PC-9 (cell line): ENCODE measurements at regions of chr7 and their contacts with region 1.

Region 1: DNA sequence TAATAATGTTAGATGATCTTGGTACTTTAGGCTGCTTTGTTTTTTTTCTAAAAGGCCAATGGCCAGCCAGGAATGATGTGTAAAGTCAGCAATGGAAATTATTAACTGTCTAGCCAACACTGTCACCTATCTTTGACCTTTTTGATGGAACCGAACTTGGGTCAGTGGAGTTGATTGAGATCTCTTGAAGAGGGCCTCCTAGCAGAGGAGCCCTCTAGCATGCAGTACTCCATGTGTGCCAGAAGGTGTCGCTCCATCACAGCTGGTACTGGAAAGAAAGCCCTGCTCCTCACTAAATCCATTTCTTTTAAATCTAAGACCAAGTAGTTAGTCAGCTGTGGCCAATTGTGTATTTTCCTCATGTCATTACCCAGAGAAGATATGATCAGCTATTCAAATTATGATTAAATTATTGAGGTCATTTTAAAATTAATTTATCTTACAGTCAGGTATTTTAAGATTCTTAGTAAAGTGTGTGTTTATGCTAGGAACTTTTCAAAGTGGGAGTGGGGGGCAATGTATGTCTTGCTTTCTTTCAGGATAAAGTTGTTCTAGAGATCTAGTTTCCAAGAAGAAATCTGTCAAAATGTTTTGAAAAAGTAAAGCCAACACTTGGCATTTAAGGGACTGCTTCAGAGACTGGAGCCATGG is 33.1 kb upstream of the CROT start:
- DNase-seq: peak; percentile 53
- H3K4me3 ChIP-seq: no peak overlapping the region
- H3K27ac ChIP-seq: no peak overlapping the region
- H3K4me1 ChIP-seq: peaks cover 16% of the 10 kb centered on the region
- H3K27me3 ChIP-seq: no peaks in the 10 kb centered on the region
- CTCF ChIP-seq: peak; percentile 98

Region 2: GRCh38 chr7:87219545-87220025 is 92.8 kb before region 1 on chr7 and contains the start of gene TMEM243:
- CTCF ChIA-PET with region 1: no interaction called
- POLR2A ChIA-PET with region 1: no interaction called
- intact Hi-C with region 1: loop called (anchors 1 kb)
- DNase-seq: peak; percentile 57 to 64
- H3K4me3 ChIP-seq: peak within 1 kb of the TSS; percentile 94
- H3K27ac ChIP-seq: peak within 1 kb of the TSS; percentile 36
- H3K4me1 ChIP-seq: peaks cover 20% of the 10 kb centered on the region
- H3K27me3 ChIP-seq: no peaks in the 10 kb centered on the region
- CTCF ChIP-seq: no peak
- total RNA-seq, gene TMEM243: 24.6 and 26.5 TPM in 2 replicates

Region 3: GRCh38 chr7:87398446-87398845 is 86.1 kb after region 1 on chr7:
- CTCF ChIA-PET with region 1: no interaction called
- POLR2A ChIA-PET with region 1: no interaction called
- intact Hi-C with region 1: loop called (anchors 5 kb)
- DNase-seq: peak; percentile 33 to 90
- H3K4me3 ChIP-seq: no peak overlapping the region
- H3K27ac ChIP-seq: peak overlapping the region; percentile 22
- H3K4me1 ChIP-seq: peaks cover 26% of the 10 kb centered on the region
- H3K27me3 ChIP-seq: no peaks in the 10 kb centered on the region
- CTCF ChIP-seq: no peak

Region 4: DNA sequence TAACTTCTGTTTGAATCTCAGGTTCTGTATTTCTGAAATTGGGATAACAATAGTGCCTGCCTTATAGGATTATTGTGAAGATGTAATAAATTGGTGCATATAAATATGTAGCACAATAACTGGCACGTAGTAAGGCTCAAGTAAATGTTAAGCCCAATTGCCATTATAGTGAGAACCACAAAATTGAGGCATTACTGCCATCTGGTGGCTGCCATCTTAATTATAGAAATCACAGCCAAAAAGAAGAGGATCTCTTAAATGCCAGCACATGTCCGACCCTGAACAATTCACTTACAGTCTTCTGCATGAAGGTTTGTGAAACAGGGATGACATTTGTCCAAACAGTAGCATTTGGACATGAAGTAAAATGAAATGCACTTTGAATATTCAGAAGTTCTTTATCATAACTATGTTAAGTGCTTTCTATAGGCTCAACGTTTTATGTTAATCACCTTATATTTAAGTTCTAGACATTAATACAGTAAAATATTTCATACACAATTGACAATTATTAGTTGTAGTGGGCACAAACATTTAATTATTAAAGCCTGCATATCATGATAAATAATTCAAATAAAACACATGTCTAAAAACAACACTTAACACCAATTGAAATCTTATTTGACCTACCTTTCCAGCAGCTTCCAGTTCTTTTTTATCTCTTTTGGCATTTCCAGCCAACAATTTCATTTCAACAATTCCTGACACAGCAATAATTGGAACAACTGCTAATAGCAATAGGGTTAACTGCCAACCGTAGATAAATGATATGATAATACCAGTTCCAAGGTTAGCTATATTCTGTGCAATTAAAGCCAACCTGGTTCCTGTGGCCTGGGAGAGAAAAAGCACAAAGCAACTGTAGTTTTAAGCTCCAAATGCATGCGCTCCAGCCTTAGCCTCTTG is 104.6 kb after region 1 on chr7:
- CTCF ChIA-PET with region 1: interaction called, 4 read pairs
- POLR2A ChIA-PET with region 1: no interaction called
- intact Hi-C with region 1: loop called (anchors 1 kb)
- DNase-seq: peak in 1 of 2 experiments; percentile 55
- H3K4me3 ChIP-seq: no peak overlapping the region
- H3K27ac ChIP-seq: no peak overlapping the region
- H3K4me1 ChIP-seq: no peaks in the 10 kb centered on the region
- H3K27me3 ChIP-seq: no peaks in the 10 kb centered on the region
- CTCF ChIP-seq: peak; percentile 84

Region 5: DNA sequence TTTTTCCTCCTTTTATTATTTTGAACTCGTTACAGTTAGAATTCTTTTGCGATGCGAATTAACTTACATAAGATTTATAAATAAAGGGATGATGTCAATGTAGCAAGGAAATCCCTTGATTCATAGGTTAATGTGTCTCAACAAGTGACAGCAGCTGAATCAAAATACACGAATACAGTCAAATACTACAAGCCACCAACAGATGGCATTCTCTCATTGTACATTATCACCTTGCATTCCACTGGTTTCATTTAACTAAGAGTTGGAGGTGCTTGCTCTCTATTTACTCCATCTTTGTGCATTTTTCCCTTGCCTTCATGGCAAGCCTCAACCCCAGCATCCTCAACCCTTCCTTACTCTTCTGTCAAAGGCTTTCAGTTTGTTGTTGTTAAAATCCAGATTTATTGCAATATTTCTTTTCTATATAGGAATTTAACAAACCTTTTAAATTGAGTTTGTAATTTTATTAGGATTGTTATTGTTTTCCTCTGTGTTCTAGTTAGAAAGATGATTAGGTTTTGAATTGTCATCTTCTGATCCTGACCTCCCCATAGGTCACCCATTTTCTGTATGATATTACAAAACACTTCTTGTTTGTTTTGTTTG is 485.6 kb after region 1 on chr7:
- CTCF ChIA-PET with region 1: no interaction called
- POLR2A ChIA-PET with region 1: no interaction called
- intact Hi-C with region 1: loop called (anchors 5 kb)
- DNase-seq: peak in 1 of 2 experiments; percentile 35
- H3K4me3 ChIP-seq: no peak overlapping the region
- H3K27ac ChIP-seq: no peak overlapping the region
- H3K4me1 ChIP-seq: no peaks in the 10 kb centered on the region
- H3K27me3 ChIP-seq: no peaks in the 10 kb centered on the region
- CTCF ChIP-seq: peak; percentile 74

Region 6: DNA sequence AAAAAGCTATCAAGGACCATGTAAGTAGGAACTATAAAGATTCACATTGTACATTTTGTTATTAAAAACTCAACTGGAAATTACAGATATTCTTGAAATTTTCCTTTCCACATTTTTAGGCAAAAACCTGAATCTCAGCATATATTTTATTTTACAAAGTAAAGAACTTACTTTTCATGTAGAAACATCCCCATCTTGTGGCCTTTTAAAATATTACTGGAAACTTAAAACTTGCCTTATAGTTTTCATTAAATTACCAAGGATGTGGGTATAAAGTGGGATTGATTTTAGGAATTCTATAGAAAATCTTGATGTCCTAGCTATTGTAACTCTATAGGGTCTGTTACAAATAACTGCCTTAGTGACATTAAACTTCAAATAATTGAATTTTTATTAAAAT is 574.5 kb after region 1 on chr7:
- CTCF ChIA-PET with region 1: interaction called, 3 read pairs
- POLR2A ChIA-PET with region 1: no interaction called
- intact Hi-C with region 1: loop called (anchors 2 kb)
- DNase-seq: peak in 1 of 2 experiments; percentile 37
- H3K4me3 ChIP-seq: no peak overlapping the region
- H3K27ac ChIP-seq: no peak overlapping the region
- H3K4me1 ChIP-seq: no peaks in the 10 kb centered on the region
- H3K27me3 ChIP-seq: no peaks in the 10 kb centered on the region
- CTCF ChIP-seq: peak; percentile 71

Region 7: DNA sequence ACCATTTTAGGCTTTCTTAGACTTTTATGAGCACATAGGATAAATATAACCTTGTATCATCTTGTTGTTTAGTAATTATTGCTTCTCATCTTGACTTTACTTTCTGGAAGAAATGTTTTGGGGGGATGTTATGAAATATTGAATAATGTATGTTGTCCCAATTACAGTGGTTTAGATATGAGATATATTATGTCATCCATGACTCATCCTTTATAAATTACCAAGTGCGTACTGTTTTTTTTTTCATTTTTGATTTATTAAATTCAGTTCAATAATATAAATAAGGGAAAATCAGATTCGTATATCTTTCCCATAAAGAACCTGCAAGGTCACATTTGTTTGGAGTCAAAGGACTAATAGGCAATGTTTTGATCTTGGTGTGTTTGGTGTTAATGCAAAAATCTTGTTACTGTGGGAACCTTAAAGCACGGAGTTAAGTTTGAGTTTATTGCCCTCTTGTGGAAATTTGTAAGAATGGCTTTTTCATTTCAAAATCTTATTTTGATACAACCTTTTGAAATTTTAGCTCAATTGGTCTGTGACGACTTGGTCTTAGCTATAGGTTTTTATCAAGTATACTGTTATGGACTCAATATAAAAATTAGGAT is 798.9 kb after region 1 on chr7:
- CTCF ChIA-PET with region 1: no interaction called
- POLR2A ChIA-PET with region 1: no interaction called
- intact Hi-C with region 1: loop called (anchors 1 kb)
- DNase-seq: peak in 1 of 2 experiments; percentile 54
- H3K4me3 ChIP-seq: no peak overlapping the region
- H3K27ac ChIP-seq: no peak overlapping the region
- H3K4me1 ChIP-seq: no peaks in the 10 kb centered on the region
- H3K27me3 ChIP-seq: no peaks in the 10 kb centered on the region
- CTCF ChIP-seq: peak; percentile 76